Heart left ventricle (tissue), 16 donors: ENCODE measurements at regions of chr1 and their contacts with region 1.

Region 1: DNA sequence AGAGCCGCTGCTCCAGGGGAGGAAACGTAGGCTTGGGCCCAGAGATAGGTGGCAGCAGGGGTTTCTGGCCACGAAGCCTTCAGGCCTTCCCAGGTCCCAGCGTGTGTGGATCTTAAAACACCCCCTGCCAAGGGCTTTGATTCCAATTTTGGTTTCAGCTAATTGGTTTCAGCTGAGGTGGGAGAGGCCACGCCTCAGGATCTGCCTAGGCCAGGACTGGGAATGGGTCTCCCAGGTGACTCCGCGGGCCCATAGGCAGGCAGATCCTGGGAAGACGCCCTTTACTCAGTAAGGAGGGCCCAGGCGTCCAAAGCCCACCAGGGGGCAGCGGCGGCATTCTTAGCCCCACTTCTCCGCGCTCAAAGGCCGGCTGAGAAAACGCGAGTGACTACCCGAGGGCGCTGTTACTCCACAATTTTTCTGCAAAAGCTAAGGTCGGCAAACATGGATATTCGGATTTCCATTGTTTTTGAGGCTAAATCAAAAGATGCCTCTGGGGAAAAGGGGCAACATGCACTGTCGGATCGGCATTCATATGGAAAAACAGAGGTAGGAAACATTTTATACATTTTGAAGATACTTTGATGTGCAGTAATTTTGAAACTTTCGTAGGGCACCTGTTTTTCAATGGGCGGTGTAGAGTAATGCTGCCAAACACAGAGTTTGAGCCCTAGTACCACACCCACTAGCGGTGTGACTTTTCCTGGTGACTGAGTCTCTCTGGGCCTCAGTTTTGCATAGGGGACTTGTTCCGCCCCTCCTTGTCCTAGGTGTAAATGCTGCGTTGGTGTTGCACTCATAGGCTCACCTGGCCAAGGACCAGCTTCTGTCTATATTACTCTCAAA is 31.8 kb upstream of the BCL10 start:
- DNase-seq: peak; percentile 87 to 92 (median 88)
- ATAC-seq: peak; percentile 94 to 99 (median 97)
- H3K4me3 ChIP-seq: peak overlapping the region in 1 of 12 donors; percentile 3
- H3K27ac ChIP-seq: no peak overlapping the region
- H3K4me1 ChIP-seq: peaks cover 0 to 13% (median 7%) of the 10 kb centered on the region in 12 donors
- H3K27me3 ChIP-seq: peaks cover 0 to 11% (median 0%) of the 10 kb centered on the region in 9 donors
- CTCF ChIP-seq: peak; percentile 87 to 100 (median 99)
- POLR2A ChIP-seq: no peak

Region 2: GRCh38 chr1:85398391-85399064 is 90.3 kb after region 1 on chr1:
- intact Hi-C with region 1: loop called (anchors 1 to 5 kb)
- DNase-seq: no peak
- ATAC-seq: peak; percentile 13 to 66 (median 42)
- H3K4me3 ChIP-seq: no peak overlapping the region
- H3K27ac ChIP-seq: peak overlapping the region in 1 of 12 donors; percentile 25
- H3K4me1 ChIP-seq: peaks cover 0 to 26% (median 0%) of the 10 kb centered on the region in 12 donors
- H3K27me3 ChIP-seq: no peaks in the 10 kb centered on the region
- CTCF ChIP-seq: peak; percentile 11 to 52 (median 32)
- POLR2A ChIP-seq: no peak

Region 3: GRCh38 chr1:85413169-85413568 is 105.0 kb after region 1 on chr1:
- intact Hi-C with region 1: no loop called
- DNase-seq: no peak
- ATAC-seq: peak in 1 of 4 donors; percentile 29
- H3K4me3 ChIP-seq: no peak overlapping the region
- H3K27ac ChIP-seq: peak overlapping the region in 2 of 12 donors; percentile 6 to 15
- H3K4me1 ChIP-seq: peaks cover 0 to 9% (median 0%) of the 10 kb centered on the region in 12 donors
- H3K27me3 ChIP-seq: no peaks in the 10 kb centered on the region
- CTCF ChIP-seq: no peak
- POLR2A ChIP-seq: no peak

Region 4: DNA sequence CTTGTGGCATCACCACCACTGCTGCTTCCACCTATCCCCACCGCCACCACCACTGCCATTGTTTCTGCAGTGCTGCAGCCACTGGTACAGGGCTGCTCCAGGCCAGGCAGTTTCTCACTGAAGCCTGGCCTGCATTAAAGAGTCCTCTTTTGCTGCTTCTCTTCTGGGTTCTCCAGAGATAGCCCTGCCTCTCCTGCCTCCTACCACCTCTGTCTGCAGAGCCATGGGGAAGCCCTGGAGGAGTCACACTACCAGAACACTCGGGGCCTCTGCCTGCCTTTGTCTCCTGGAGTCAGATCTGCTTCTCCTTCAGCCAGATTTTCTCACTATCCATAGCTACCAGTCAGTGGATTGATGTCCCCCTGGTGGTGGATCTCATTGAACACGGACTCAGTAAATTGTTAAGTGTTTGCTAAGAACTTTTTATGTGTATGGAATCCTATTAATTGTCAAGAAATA is 194.4 kb after region 1 on chr1:
- intact Hi-C with region 1: loop called (anchors 1 to 5 kb)
- DNase-seq: peak; percentile 38 to 56 (median 45)
- ATAC-seq: peak; percentile 42 to 90 (median 84)
- H3K4me3 ChIP-seq: no peak overlapping the region
- H3K27ac ChIP-seq: peak overlapping the region in 1 of 12 donors; percentile 43
- H3K4me1 ChIP-seq: peaks cover 0 to 8% (median 3%) of the 10 kb centered on the region in 12 donors
- H3K27me3 ChIP-seq: no peaks in the 10 kb centered on the region
- CTCF ChIP-seq: peak; percentile 39 to 71 (median 56)
- POLR2A ChIP-seq: no peak

Region 5: DNA sequence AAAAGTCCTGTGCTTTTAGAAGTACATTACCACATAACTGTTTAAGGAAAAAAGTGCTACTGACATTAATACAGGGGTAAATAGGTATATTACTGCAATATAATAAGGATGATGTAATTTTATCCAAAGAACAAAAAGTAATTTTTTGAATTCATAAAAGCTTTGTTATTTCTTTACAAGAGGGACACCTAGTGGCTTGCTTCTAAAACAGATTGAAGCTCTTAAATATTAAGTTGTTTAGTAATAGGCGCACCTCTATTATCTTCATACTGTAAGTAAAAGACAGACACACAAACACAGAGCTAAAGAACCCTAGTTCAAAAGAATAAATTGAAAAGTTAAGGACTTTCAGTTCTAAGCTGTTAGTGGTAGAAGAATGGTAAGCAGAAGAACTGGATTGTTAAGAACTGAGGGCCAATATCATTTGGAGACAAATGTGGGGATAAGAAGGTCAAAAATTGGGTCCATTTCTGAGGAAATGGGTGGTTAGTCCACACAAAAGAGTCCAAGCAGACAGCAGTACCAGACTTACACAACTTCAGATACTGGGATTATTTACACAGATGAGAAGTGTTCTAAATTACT is 384.6 kb after region 1 on chr1:
- intact Hi-C with region 1: loop called (anchors 1 to 5 kb)
- DNase-seq: no peak
- ATAC-seq: peak in 2 of 4 donors; percentile 35 to 47
- H3K4me3 ChIP-seq: no peak overlapping the region
- H3K27ac ChIP-seq: peak overlapping the region in 3 of 12 donors; percentile 4 to 10 (median 9)
- H3K4me1 ChIP-seq: peaks cover 0 to 19% (median 7%) of the 10 kb centered on the region in 12 donors
- H3K27me3 ChIP-seq: no peaks in the 10 kb centered on the region
- CTCF ChIP-seq: peak; percentile 25 to 69 (median 52)
- POLR2A ChIP-seq: no peak

Region 6: GRCh38 chr1:85884372-85885035 is 576.3 kb after region 1 on chr1:
- intact Hi-C with region 1: loop called in 2 of 10 experiments (anchors 10 kb)
- DNase-seq: no peak
- ATAC-seq: no peak
- H3K4me3 ChIP-seq: no peak overlapping the region
- H3K27ac ChIP-seq: no peak overlapping the region
- H3K4me1 ChIP-seq: no peaks in the 10 kb centered on the region
- H3K27me3 ChIP-seq: no peaks in the 10 kb centered on the region
- CTCF ChIP-seq: peak in 5 of 12 donors; percentile 16 to 44 (median 38)
- POLR2A ChIP-seq: no peak